A673 (cell line): ENCODE measurements at regions of chr5 and their contacts with region 1.

Region 1: DNA sequence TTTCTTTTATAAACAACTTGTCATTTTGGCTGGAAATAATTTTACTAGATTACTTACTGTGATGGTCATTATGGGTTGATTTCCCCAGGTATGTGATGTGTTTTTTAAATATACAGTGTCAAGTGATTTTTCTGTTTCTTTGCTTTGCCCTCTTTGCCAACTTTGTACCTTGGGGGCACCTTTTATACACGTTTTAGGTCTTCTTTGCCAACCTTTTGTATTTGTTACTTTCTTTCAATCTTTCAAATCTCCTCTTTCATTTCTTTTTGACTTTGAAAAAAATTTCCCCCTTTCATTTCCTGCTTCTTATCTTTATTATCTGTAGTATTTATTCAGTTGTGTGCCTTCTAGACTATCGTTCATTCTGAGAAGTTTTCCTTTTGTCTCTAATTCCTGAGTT is 65.4 kb upstream of the DHFR start:
- DNase-seq: no peak
- H3K4me3 ChIP-seq: no peak overlapping the region
- H3K27ac ChIP-seq: no peak overlapping the region
- H3K4me1 ChIP-seq: no peaks in the 10 kb centered on the region
- H3K27me3 ChIP-seq: no peaks in the 10 kb centered on the region
- CTCF ChIP-seq: no peak

Region 2: GRCh38 chr5:80895523-80895922 is 175.3 kb after region 1 on chr5:
- CTCF ChIA-PET with region 1: no interaction called
- POLR2A ChIA-PET with region 1: no interaction called
- intact Hi-C with region 1: no loop called
- DNase-seq: no peak
- H3K4me3 ChIP-seq: no peak overlapping the region
- H3K27ac ChIP-seq: no peak overlapping the region
- H3K4me1 ChIP-seq: no peaks in the 10 kb centered on the region
- H3K27me3 ChIP-seq: no peaks in the 10 kb centered on the region
- CTCF ChIP-seq: no peak

Region 3: DNA sequence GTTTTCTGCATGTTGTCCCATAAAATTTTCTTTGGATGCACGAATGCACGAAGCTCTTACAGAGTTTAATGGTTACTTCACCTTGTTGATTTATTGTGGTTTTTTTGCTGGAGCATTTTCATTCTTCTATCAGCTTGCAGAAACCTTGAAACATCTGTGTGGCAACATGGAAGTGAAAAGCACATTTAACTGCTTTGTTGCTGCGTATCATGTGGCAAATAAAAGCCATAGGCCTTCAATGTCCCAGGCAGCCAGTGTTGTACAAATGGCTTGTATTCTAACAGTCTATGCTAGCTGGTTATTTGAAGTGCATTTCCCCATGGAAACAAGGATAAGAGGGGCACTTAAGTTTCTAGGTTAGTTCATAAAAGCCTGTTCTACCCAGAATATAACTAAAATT is 197.4 kb after region 1 on chr5:
- CTCF ChIA-PET with region 1: no interaction called
- POLR2A ChIA-PET with region 1: interaction called, 20 read pairs
- intact Hi-C with region 1: no loop called
- DNase-seq: no peak
- H3K4me3 ChIP-seq: no peak overlapping the region
- H3K27ac ChIP-seq: no peak overlapping the region
- H3K4me1 ChIP-seq: peaks cover 5% of the 10 kb centered on the region
- H3K27me3 ChIP-seq: no peaks in the 10 kb centered on the region
- CTCF ChIP-seq: no peak